Colonic mucosa (tissue), 4 donors: ENCODE measurements at regions of chr12 and their contacts with region 1.

Region 1: GRCh38 chr12:11730299-11731041 is 81.0 kb downstream of the ETV6 start:
- DNase-seq: peak; percentile 84
- H3K4me3 ChIP-seq: no peak overlapping the region
- H3K27ac ChIP-seq: peak overlapping the region; percentile 78
- H3K4me1 ChIP-seq: peaks cover 12% of the 10 kb centered on the region
- H3K27me3 ChIP-seq: no peaks in the 10 kb centered on the region
- CTCF ChIP-seq: no peak

Region 2: GRCh38 chr12:11649703-11650521 is 80.6 kb before region 1 on chr12:
- intact Hi-C with region 1: loop called (anchors 5 kb)
- DNase-seq: peak; percentile 53
- H3K4me3 ChIP-seq: peak overlapping the region; percentile 67
- H3K27ac ChIP-seq: peak overlapping the region; percentile 97
- H3K4me1 ChIP-seq: peaks cover 5% of the 10 kb centered on the region
- H3K27me3 ChIP-seq: no peaks in the 10 kb centered on the region
- CTCF ChIP-seq: no peak